Aorta (tissue), 5 donors: ENCODE measurements at regions of chr20 and their contacts with region 1.

Region 1: GRCh38 chr20:2651772-2652723 is at the start of gene NOP56:
- DNase-seq: peak; percentile 94 to 96
- ATAC-seq: peak; percentile 98
- H3K4me3 ChIP-seq: peak within 1 kb of the TSS; percentile 88 to 91
- H3K27ac ChIP-seq: peak within 1 kb of the TSS; percentile 91 to 92
- H3K4me1 ChIP-seq: no peaks in the 10 kb centered on the region
- H3K27me3 ChIP-seq: peaks cover 0 to 2% of the 10 kb centered on the region in 2 donors
- total RNA-seq, gene NOP56: 81.6 to 88.3 TPM

Region 2: DNA sequence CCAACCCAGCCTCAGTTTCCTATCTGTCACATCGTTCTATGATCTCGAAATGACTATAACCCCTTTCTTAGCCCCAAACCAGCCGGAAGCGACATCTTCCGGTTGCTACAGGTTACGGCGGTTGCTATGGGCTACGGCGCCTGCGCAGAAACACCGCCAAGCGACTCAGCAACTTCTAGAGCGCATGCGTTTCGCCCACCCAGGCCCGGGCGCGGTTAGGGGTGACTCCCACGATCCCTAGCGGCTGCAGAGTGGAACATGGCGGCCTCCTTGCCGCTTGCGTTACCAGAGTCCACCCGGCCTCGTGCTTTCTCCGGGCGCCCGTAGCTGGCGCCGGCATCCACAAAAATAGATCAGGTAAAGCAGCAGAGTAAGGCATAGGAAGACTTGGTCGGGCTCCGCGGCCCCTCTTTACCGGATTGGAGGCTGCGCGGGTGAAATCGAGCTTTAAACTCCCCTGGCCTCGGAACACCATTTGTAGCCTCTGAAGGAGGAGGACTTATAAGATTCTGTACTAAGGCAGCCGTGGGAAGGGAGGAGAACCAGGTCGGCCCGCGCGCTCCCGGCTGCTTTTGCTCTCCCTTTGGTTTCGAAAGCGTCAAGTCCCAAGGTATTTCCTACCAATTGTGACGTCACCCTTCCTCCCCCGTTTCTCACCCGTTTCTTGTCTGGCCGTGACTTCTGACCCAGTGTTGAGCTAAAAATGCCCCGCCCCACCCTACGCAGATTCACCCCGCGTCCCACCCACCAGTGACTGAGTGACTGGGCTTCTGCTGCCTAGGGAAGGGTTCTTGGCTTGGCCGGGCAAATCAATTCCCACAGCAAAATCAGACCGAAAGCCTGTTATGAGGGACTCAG is 1326.6 kb before region 1 on chr20:
- intact Hi-C with region 1: loop called in 1 of 2 experiments (anchors 10 kb)
- DNase-seq: peak; percentile 99 to 100
- ATAC-seq: peak; percentile 97
- H3K4me3 ChIP-seq: peak overlapping the region; percentile 74 to 95
- H3K27ac ChIP-seq: peak overlapping the region; percentile 62 to 94
- H3K4me1 ChIP-seq: no peaks in the 10 kb centered on the region
- H3K27me3 ChIP-seq: no peaks in the 10 kb centered on the region

Region 3: GRCh38 chr20:2663887-2664719 is 12.1 kb after region 1 on chr20 and contains the start of gene IDH3B:
- intact Hi-C with region 1: loop called in 1 of 2 experiments (anchors 1 kb)
- DNase-seq: peak; percentile 96 to 97
- ATAC-seq: peak; percentile 96
- H3K4me3 ChIP-seq: peak within 1 kb of the TSS; percentile 31 to 58
- H3K27ac ChIP-seq: peak within 1 kb of the TSS; percentile 39 to 80
- H3K4me1 ChIP-seq: no peaks in the 10 kb centered on the region
- H3K27me3 ChIP-seq: no peaks in the 10 kb centered on the region
- total RNA-seq, gene IDH3B: 51.4 to 63.1 TPM